ENCODE measurements at regions of chr4 and their contacts with region 1.

Region 1: GRCh38 chr4:99563310-99564186 is at the start of gene TRMT10A:
- DNase-seq: peak; percentile 96 to 99 (median 98)
- ATAC-seq: peak; percentile 98
- H3K4me3 ChIP-seq: peak within 1 kb of the TSS; percentile 33
- H3K4me1 ChIP-seq: no peaks in the 10 kb centered on the region
- CTCF ChIP-seq: peak; percentile 26
- total RNA-seq, gene TRMT10A: 4.6 to 9.1 (median 7.7) TPM

Region 2: DNA sequence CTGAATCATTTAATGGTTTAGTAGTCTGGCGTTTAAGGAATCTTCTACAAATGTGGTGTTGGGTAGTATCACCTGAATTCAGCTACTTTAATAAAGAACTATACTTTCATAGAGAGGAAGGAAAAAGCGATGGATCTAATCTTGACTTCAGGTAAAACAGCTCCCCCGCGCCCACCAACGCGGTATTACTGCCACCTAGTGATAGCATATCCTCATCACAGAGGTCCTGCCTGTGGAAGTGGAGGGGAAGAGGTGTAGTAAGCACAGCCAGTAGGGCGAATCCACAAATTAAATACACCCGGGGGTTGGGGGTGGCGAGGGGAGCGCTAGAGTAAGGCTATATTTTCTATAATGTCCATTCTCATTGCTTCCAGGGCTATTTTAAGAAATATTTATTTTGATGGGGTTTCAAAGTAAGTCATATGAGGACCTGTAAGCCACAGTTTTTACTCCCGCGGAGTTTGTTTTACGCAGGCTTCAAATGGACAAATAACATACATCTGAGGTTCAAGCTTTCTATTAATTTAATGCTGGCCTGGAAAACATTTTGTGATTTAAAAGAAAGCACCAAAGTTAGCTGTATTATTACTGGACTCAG is 244.8 kb after region 1 on chr4:
- intact Hi-C with region 1: loop called in 1 of 2 experiments (anchors 5 kb)
- DNase-seq: peak in 2 of 3 donors; percentile 72 to 75
- ATAC-seq: peak; percentile 88
- H3K4me3 ChIP-seq: no peak overlapping the region
- H3K4me1 ChIP-seq: no peaks in the 10 kb centered on the region
- CTCF ChIP-seq: peak; percentile 28

Measured in mucosa of descending colon (tissue), 3 donors.